ENCODE measurements at regions of chr1 and their contacts with region 1.

Region 1: DNA sequence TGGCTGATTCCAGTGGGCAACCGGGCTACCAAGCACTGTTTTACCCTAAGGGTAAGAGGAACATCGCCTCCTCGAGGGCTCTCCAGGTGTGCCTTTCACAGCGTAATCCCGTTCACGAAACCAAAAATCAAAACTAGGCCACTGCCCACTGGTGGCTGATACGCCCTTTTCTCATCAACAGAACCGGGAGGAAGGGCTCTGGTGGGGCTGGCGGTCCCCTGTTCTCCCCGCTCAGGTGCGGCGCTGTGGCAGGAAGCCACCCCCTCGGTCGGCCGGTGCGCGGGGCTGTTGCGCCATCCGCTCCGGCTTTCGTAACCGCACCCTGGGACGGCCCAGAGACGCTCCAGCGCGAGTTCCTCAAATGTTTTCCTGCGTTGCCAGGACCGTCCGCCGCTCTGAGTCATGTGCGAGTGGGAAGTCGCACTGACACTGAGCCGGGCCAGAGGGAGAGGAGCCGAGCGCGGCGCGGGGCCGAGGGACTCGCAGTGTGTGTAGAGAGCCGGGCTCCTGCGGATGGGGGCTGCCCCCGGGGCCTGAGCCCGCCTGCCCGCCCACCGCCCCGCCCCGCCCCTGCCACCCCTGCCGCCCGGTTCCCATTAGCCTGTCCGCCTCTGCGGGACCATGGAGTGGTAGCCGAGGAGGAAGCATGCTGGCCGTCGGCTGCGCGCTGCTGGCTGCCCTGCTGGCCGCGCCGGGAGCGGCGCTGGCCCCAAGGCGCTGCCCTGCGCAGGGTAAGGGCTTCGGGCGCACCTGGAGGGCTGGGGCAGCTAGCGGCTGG is at the start of gene IL6R:
- DNase-seq: peak; percentile 57 to 85 (median 74)
- ATAC-seq: peak; percentile 59 to 71
- H3K4me3 Mint-ChIP-seq: peak within 1 kb of the TSS; percentile 88 to 96 (median 93)
- H3K27ac Mint-ChIP-seq: peak within 1 kb of the TSS; percentile 92 to 98 (median 94)
- H3K4me1 Mint-ChIP-seq: peaks cover 42 to 87% (median 78%) of the 10 kb centered on the region in 4 donors
- H3K27me3 Mint-ChIP-seq: no peaks in the 10 kb centered on the region
- polyA plus RNA-seq, gene IL6R: 20.1 to 44.1 (median 28.4) TPM

Region 2: GRCh38 chr1:154335025-154335714 is 70.0 kb before region 1 on chr1:
- POLR2A ChIA-PET with region 1: interaction called, 46 read pairs
- DNase-seq: peak; percentile 83 to 97 (median 88)
- ATAC-seq: peak; percentile 97 to 99
- H3K4me3 Mint-ChIP-seq: peak overlapping the region in 9 of 10 donors; percentile 47 to 87 (median 76)
- H3K27ac Mint-ChIP-seq: peak overlapping the region; percentile 89 to 98 (median 93)
- H3K4me1 Mint-ChIP-seq: peaks cover 37 to 90% (median 83%) of the 10 kb centered on the region in 4 donors
- H3K27me3 Mint-ChIP-seq: no peaks in the 10 kb centered on the region

Region 3: GRCh38 chr1:154352581-154353459 is 52.4 kb before region 1 on chr1:
- POLR2A ChIA-PET with region 1: interaction called, 20 read pairs
- DNase-seq: peak in 8 of 10 donors; percentile 25 to 72 (median 40)
- ATAC-seq: peak; percentile 81 to 83
- H3K4me3 Mint-ChIP-seq: peak overlapping the region; percentile 78 to 99 (median 91)
- H3K27ac Mint-ChIP-seq: peak overlapping the region; percentile 86 to 96 (median 90)
- H3K4me1 Mint-ChIP-seq: peaks cover 28 to 63% (median 48%) of the 10 kb centered on the region in 4 donors
- H3K27me3 Mint-ChIP-seq: peaks cover 0 to 8% (median 0%) of the 10 kb centered on the region in 5 donors

Region 4: GRCh38 chr1:154419620-154420571 is 14.7 kb after region 1 on chr1:
- POLR2A ChIA-PET with region 1: interaction called, 106 read pairs
- DNase-seq: peak in 6 of 10 donors; percentile 31 to 56 (median 33)
- ATAC-seq: peak; percentile 78 to 82
- H3K4me3 Mint-ChIP-seq: peak overlapping the region; percentile 54 to 88 (median 77)
- H3K27ac Mint-ChIP-seq: peak overlapping the region; percentile 85 to 99 (median 94)
- H3K4me1 Mint-ChIP-seq: peaks cover 43 to 90% (median 81%) of the 10 kb centered on the region in 4 donors
- H3K27me3 Mint-ChIP-seq: no peaks in the 10 kb centered on the region

Region 5: DNA sequence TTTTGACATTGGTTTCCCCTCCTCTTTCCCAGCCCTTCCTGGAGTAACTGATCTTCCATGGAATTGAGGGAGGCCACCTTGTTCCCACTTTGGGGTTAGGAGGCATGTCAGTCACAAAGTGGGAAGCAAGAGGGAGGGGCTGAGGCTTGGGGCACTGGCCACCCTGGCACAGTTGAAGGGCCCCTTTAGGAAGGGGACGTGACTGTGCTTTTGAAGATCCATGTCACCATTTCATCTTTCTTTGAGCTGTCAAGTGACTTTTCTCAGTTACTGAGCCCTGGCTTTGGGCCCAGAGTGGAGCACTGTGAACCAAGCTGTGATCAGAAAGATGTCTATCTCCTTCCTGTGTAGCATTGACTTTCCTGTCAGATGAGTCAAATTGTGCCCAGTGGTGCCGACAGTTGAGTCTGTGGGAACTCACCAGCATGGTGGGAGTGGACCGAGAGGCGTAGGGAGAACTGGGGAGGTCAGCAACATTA is 58.4 kb after region 1 on chr1:
- POLR2A ChIA-PET with region 1: interaction called, 14 read pairs
- DNase-seq: peak in 9 of 10 donors; percentile 17 to 74 (median 51)
- ATAC-seq: peak; percentile 86 to 87
- H3K4me3 Mint-ChIP-seq: peak overlapping the region; percentile 46 to 86 (median 74)
- H3K27ac Mint-ChIP-seq: peak overlapping the region; percentile 54 to 96 (median 92)
- H3K4me1 Mint-ChIP-seq: peaks cover 23 to 72% (median 55%) of the 10 kb centered on the region in 4 donors
- H3K27me3 Mint-ChIP-seq: no peaks in the 10 kb centered on the region

Region 6: DNA sequence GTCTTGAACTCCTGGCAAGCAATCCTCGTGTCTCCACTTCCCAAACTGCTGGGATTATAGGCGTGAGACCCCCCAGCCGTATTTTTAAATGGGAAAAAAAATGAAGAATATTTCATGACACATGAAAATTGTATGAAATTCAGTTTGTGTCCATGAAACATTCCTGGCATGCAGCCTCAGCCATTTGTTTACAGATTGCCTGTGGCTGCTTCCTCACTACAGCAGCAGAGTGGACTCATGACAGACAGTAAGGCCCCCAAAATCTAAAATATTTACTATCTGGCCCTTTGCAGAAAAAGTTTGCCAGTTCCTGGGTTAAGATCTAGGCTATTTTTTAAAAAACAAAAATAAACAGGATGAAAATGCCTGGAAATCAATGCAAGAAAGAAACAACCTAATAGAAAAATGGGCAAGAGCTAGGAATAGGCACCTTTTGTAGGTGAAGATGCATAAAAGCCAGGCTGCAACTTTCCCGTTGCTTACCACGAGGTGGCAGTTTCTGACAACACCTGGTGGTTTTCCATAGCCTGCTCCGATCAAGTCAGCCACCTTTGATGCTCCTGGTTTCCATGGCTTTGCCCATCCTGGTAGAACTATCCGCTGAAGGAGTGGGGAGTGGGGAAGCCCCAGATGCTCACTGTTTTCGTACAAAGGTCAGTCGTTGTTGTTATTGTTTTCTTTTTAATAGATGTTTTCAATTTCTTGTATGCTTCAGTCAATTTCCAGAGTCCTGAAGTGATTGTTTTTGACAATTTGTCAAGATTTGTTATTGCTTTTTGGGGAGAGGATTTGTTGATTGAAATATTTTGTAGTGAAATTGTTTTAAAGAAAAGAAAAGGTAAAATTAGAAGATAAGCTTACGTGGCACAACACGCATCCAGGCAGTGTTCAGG is 129.0 kb after region 1 on chr1:
- POLR2A ChIA-PET with region 1: no interaction called
- DNase-seq: no peak
- ATAC-seq: no peak
- H3K4me3 Mint-ChIP-seq: no peak overlapping the region
- H3K27ac Mint-ChIP-seq: no peak overlapping the region
- H3K4me1 Mint-ChIP-seq: no peaks in the 10 kb centered on the region
- H3K27me3 Mint-ChIP-seq: peaks cover 0 to 8% (median 5%) of the 10 kb centered on the region in 5 donors

Region 7: GRCh38 chr1:154906621-154907081 is 501.5 kb after region 1 on chr1:
- POLR2A ChIA-PET with region 1: no interaction called
- DNase-seq: peak in 1 of 10 donors; percentile 4
- ATAC-seq: no peak
- H3K4me3 Mint-ChIP-seq: no peak overlapping the region
- H3K27ac Mint-ChIP-seq: no peak overlapping the region
- H3K4me1 Mint-ChIP-seq: peaks cover 0 to 2% (median 0%) of the 10 kb centered on the region in 4 donors
- H3K27me3 Mint-ChIP-seq: peaks cover 0 to 3% (median 1%) of the 10 kb centered on the region in 5 donors

Measured in naive thymus-derived CD8-positive, alpha-beta T cell (primary cell).